ENCODE measurements at regions of chr4 and their contacts with region 1.

Region 1: DNA sequence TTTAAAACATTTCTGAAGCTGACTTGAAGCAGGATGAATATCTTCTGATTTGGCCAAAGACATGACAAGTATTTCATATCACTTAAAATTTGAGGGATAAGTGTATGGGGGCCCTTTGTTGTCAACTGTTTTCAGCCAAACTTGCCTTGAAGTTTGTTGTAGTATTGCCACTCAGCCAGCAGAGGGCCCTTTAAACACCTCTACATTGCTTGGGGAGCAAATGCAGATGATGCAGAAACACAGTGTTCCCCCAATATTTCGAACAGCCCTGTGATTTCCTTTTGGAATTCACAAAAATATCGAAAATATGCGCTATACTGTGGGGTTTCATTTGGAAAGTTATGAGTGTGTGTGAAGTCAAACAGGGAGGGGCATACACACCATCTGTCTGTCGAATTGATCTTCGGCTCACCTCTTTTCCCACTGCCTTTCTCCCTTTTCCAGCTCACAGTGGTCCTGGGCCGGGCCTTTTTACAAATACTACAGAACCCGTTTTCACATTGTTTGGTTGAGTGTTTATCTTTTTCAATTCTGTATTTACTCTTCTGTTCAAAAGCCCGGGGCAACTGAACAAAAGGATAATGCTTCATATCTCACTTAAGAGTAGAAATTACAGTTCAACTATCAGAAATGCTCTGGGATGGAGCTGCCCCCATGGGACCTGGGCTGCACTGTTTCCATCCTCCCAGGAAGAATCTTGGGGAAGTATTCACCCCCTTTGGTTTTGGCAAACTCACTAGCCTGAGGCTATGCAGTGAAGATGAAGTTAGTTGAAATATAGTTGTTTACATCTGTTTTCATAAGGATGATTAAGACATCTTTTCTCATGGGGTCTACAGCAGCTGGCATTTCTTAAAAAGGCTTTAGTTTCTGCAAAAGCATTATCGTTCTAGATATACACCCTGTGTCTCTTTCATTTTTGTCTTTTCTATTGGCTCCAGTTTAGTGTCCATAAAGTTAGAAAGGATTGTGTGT is 137.6 kb downstream of the EGF start:
- DNase-seq: peak; percentile 22 to 72 (median 56)
- ATAC-seq: peak; percentile 71
- H3K4me3 ChIP-seq: no peak overlapping the region
- H3K4me3 Mint-ChIP-seq: no peak overlapping the region
- H3K27ac ChIP-seq: no peak overlapping the region
- H3K27ac Mint-ChIP-seq: no peak overlapping the region
- H3K4me1 ChIP-seq: no peaks in the 10 kb centered on the region
- H3K4me1 Mint-ChIP-seq: no peaks in the 10 kb centered on the region
- H3K27me3 ChIP-seq: no peaks in the 10 kb centered on the region
- H3K27me3 Mint-ChIP-seq: no peaks in the 10 kb centered on the region
- CTCF ChIP-seq: peak; percentile 71

Region 2: DNA sequence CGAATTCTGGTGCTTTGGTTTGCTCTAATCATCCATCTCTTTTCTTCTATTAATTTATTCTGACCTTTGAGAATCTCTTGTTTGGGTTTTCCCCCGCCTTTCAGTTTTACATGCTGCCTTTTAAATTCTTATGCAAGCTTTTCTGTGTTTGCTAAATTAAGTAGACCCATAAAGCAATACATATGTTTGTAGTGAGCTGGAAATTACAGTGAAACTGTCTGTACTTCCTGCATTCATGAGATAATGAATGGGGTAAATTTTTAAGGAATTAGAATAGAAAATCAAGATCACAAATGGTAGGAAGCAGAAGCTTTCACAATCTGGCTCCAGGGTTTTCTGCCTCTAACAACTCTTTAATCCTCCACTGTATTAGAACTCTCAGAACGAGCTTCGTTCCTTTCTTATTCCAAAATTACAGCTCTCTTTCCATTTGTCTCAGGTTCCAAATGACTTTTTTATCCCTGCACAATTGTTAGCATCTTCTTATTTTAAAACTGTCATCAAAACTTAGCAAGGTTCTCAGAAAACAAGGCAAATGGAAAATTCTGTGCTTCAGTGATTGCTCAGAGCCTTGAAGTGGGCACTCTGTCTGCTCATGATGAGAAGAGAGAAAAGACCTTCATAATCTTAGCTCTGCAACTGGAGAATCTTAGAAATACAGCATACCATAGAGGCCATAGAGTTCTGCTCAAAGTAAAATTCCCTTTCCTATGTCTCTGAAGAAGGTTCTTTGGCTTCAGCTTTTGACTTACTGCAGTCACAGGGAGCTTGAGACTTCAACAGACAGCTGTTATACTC is 29.4 kb before region 1 on chr4:
- CTCF ChIA-PET with region 1: interaction called, 17 read pairs
- POLR2A ChIA-PET with region 1: no interaction called
- intact Hi-C with region 1: no loop called
- DNase-seq: no peak
- ATAC-seq: no peak
- H3K4me3 ChIP-seq: no peak overlapping the region
- H3K4me3 Mint-ChIP-seq: no peak overlapping the region
- H3K27ac ChIP-seq: no peak overlapping the region
- H3K27ac Mint-ChIP-seq: no peak overlapping the region
- H3K4me1 ChIP-seq: no peaks in the 10 kb centered on the region
- H3K4me1 Mint-ChIP-seq: no peaks in the 10 kb centered on the region
- H3K27me3 ChIP-seq: no peaks in the 10 kb centered on the region
- H3K27me3 Mint-ChIP-seq: no peaks in the 10 kb centered on the region
- CTCF ChIP-seq: no peak

Region 3: DNA sequence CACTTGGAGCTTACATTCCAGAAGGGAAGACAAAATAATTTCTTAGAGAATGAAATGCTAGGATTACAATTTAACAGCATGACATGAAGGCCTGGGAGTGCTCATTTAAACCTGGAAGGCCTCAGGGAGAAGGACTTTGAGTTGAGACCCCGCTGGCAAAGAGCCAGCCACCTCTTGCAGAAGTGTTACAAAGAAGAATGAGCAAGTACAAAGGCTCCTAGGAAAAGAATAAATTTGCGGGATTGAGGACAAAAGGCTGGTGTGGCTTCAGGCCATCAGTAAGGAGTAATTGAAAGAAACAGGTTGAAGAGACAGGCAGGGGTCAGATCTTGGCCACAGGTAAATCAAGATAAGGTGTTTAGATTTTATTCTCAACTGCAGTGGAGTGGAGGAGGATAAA is 151.3 kb after region 1 on chr4:
- CTCF ChIA-PET with region 1: interaction called, 56 read pairs
- POLR2A ChIA-PET with region 1: no interaction called
- intact Hi-C with region 1: loop called in 1 of 2 experiments (anchors 1 kb)
- DNase-seq: no peak
- ATAC-seq: no peak
- H3K4me3 ChIP-seq: no peak overlapping the region
- H3K4me3 Mint-ChIP-seq: no peak overlapping the region
- H3K27ac ChIP-seq: no peak overlapping the region
- H3K27ac Mint-ChIP-seq: no peak overlapping the region
- H3K4me1 ChIP-seq: no peaks in the 10 kb centered on the region
- H3K4me1 Mint-ChIP-seq: peaks cover 8% of the 10 kb centered on the region
- H3K27me3 ChIP-seq: no peaks in the 10 kb centered on the region
- H3K27me3 Mint-ChIP-seq: no peaks in the 10 kb centered on the region
- CTCF ChIP-seq: no peak

Region 4: GRCh38 chr4:110510955-110511544 is 460.8 kb after region 1 on chr4:
- CTCF ChIA-PET with region 1: interaction called, 37 read pairs
- POLR2A ChIA-PET with region 1: no interaction called
- intact Hi-C with region 1: loop called (anchors 1 kb)
- DNase-seq: peak in 2 of 9 experiments; percentile 58 to 70
- ATAC-seq: peak; percentile 51
- H3K4me3 ChIP-seq: no peak overlapping the region
- H3K4me3 Mint-ChIP-seq: no peak overlapping the region
- H3K27ac ChIP-seq: no peak overlapping the region
- H3K27ac Mint-ChIP-seq: no peak overlapping the region
- H3K4me1 ChIP-seq: peaks cover 10% of the 10 kb centered on the region
- H3K4me1 Mint-ChIP-seq: peaks cover 10% of the 10 kb centered on the region
- H3K27me3 ChIP-seq: no peaks in the 10 kb centered on the region
- H3K27me3 Mint-ChIP-seq: peaks cover 2% of the 10 kb centered on the region
- CTCF ChIP-seq: peak; percentile 86

Region 5: GRCh38 chr4:110526589-110526988 is 476.4 kb after region 1 on chr4:
- CTCF ChIA-PET with region 1: no interaction called
- POLR2A ChIA-PET with region 1: no interaction called
- intact Hi-C with region 1: no loop called
- DNase-seq: no peak
- ATAC-seq: no peak
- H3K4me3 ChIP-seq: no peak overlapping the region
- H3K4me3 Mint-ChIP-seq: no peak overlapping the region
- H3K27ac ChIP-seq: no peak overlapping the region
- H3K27ac Mint-ChIP-seq: no peak overlapping the region
- H3K4me1 ChIP-seq: no peaks in the 10 kb centered on the region
- H3K4me1 Mint-ChIP-seq: peaks cover 2% of the 10 kb centered on the region
- H3K27me3 ChIP-seq: peaks cover 0 to 4% of the 10 kb centered on the region in 2 experiments
- H3K27me3 Mint-ChIP-seq: peaks cover 20% of the 10 kb centered on the region
- CTCF ChIP-seq: no peak

Region 6: DNA sequence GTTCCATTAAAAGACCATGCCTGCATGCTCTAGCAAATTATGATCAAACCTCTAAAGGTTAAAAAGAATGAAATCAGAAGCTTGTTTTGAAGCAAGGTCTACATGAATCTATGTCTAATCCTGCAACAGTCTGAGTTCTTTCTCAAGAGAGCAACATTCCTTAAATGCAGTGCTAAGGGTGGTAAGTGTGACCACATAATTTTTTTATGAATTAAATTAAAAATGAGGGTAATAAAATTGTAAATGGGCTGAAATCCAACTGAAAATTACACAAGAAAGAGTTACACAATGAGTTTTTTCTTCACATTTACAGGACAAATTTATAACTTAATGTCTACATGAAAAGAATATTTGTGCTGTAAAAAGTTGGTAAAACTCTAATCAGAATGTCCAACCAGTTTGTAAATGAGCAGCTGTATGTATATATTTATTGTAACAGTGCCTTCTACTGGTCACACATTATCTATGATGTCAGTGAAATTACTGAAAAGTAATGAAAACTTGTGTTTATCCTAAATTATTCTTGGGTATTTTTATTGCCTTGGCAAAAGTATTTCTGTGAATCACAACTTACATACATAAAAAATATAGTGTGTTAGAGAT is 908.9 kb after region 1 on chr4:
- CTCF ChIA-PET with region 1: no interaction called
- POLR2A ChIA-PET with region 1: no interaction called
- intact Hi-C with region 1: no loop called
- DNase-seq: no peak
- ATAC-seq: no peak
- H3K4me3 ChIP-seq: no peak overlapping the region
- H3K4me3 Mint-ChIP-seq: no peak overlapping the region
- H3K27ac ChIP-seq: no peak overlapping the region
- H3K27ac Mint-ChIP-seq: no peak overlapping the region
- H3K4me1 ChIP-seq: no peaks in the 10 kb centered on the region
- H3K4me1 Mint-ChIP-seq: no peaks in the 10 kb centered on the region
- H3K27me3 ChIP-seq: no peaks in the 10 kb centered on the region
- H3K27me3 Mint-ChIP-seq: no peaks in the 10 kb centered on the region
- CTCF ChIP-seq: no peak

Measured in CD8-positive, alpha-beta T cell (primary cell).